Sciatic nerve (tissue), 2 donors: ENCODE measurements at regions of chr1 and their contacts with region 1.

Region 1: GRCh38 chr1:112715264-112716053 is at the start of gene PPM1J:
- DNase-seq: peak; percentile 100
- ATAC-seq: peak; percentile 94
- total RNA-seq, gene PPM1J: 1.8 TPM

Region 2: DNA sequence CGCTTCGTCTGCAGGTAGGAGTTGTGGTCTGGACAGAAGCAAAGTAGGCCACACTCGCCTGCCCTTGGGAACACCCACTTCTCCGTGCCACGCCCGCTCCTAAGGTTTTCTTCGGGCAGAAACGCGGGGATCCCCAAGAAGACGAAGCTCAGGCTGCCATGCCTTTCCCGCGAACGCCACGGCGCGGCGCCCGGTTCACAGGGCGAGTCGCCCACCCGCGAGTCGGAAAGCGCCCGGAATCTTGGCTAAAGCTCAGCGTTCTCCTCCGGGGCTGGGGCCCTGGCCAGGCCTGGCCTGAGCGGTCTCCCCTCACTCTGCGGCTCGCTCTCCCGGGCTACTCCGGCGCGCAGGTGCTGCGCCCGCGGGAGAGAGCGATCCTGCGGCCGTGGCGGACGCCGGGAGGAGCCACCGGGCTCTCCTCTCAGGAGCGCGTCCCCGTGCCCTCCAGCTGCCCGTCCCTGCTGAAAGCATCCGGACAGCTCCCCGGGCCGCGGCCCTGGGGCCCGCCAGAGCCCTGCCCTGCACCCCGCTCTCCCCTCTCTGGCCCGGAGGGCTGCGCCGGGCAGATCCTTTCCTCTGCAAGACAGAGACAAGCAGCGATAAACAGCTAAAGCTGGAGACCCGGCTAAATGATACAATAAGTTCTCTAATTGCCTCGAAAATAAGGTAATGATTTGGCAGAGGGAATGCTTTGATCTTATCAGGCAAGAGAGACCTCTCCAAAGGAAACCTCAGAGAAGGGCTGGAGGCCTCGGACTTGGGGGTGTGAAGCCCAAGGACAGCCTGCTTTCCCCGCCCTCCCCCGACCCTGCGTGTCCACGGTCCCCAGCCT is 213.4 kb before region 1 on chr1:
- intact Hi-C with region 1: loop called (anchors 10 kb)
- DNase-seq: peak; percentile 85
- ATAC-seq: peak; percentile 82

Region 3: GRCh38 chr1:112788561-112788960 is 73.1 kb after region 1 on chr1:
- intact Hi-C with region 1: no loop called
- DNase-seq: no peak
- ATAC-seq: no peak

Region 4: GRCh38 chr1:112855152-112855828 is 139.8 kb after region 1 on chr1:
- intact Hi-C with region 1: no loop called
- DNase-seq: no peak
- ATAC-seq: no peak